Activated B cell treated with CpG ODN at 0.5 μM for 24 hours (primary cell): ENCODE measurements at regions of chr17 and their contacts with region 1.

Region 1: GRCh38 chr17:8222630-8223356 is 12.4 kb upstream of the AURKB start:
- DNase-seq: peak; percentile 80
- ATAC-seq: peak; percentile 51
- H3K4me3 Mint-ChIP-seq: peak overlapping the region; percentile 97
- H3K27ac Mint-ChIP-seq: peak overlapping the region; percentile 97
- H3K4me1 Mint-ChIP-seq: peaks cover 68% of the 10 kb centered on the region
- H3K27me3 Mint-ChIP-seq: peaks cover 11% of the 10 kb centered on the region
- CTCF ChIP-seq: no peak

Region 2: GRCh38 chr17:7951143-7951803 is 271.5 kb before region 1 on chr17:
- CTCF ChIA-PET with region 1: no interaction called
- POLR2A ChIA-PET with region 1: no interaction called
- intact Hi-C with region 1: no loop called
- DNase-seq: no peak
- ATAC-seq: peak; percentile 87
- H3K4me3 Mint-ChIP-seq: no peak overlapping the region
- H3K27ac Mint-ChIP-seq: peak overlapping the region; percentile 86
- H3K4me1 Mint-ChIP-seq: peaks cover 10% of the 10 kb centered on the region
- H3K27me3 Mint-ChIP-seq: no peaks in the 10 kb centered on the region
- CTCF ChIP-seq: no peak

Region 3: DNA sequence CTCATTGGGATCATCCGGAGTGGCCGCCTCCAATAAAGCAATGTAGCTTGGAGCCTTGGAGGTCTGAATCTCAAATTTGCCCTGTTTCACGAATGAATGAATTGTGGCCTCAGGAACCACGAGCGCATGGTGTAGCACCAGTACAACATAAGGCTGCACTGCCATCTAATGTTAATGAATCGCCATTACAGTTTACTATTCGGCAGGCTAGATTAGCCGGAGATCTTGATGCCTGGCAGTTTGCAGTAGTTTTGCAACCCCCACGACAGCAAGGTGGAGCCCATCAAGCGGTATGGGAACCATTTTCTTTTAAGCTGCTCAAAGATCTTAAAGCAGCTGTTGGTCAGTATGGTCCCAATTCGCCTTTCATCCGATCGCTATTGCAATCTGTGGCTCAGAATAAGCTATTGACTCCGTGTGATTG is 165.1 kb before region 1 on chr17:
- CTCF ChIA-PET with region 1: no interaction called
- POLR2A ChIA-PET with region 1: no interaction called
- intact Hi-C with region 1: no loop called
- DNase-seq: no peak
- ATAC-seq: peak; percentile 80
- H3K4me3 Mint-ChIP-seq: no peak overlapping the region
- H3K27ac Mint-ChIP-seq: no peak overlapping the region
- H3K4me1 Mint-ChIP-seq: peaks cover 25% of the 10 kb centered on the region
- H3K27me3 Mint-ChIP-seq: peaks cover 19% of the 10 kb centered on the region
- CTCF ChIP-seq: no peak

Region 4: GRCh38 chr17:8091033-8091687 is 131.6 kb before region 1 on chr17:
- CTCF ChIA-PET with region 1: no interaction called
- POLR2A ChIA-PET with region 1: interaction called, 16 read pairs
- intact Hi-C with region 1: no loop called
- DNase-seq: peak; percentile 71
- ATAC-seq: peak; percentile 90
- H3K4me3 Mint-ChIP-seq: peak overlapping the region; percentile 80
- H3K27ac Mint-ChIP-seq: peak overlapping the region; percentile 95
- H3K4me1 Mint-ChIP-seq: peaks cover 46% of the 10 kb centered on the region
- H3K27me3 Mint-ChIP-seq: peaks cover 7% of the 10 kb centered on the region
- CTCF ChIP-seq: no peak

Region 5: GRCh38 chr17:8156246-8156992 is 66.4 kb before region 1 on chr17:
- CTCF ChIA-PET with region 1: interaction called, 3 read pairs
- POLR2A ChIA-PET with region 1: interaction called, 14 read pairs
- intact Hi-C with region 1: loop called (anchors 1 kb)
- DNase-seq: peak; percentile 98
- ATAC-seq: peak; percentile 82
- H3K4me3 Mint-ChIP-seq: no peak overlapping the region
- H3K27ac Mint-ChIP-seq: no peak overlapping the region
- H3K4me1 Mint-ChIP-seq: peaks cover 48% of the 10 kb centered on the region
- H3K27me3 Mint-ChIP-seq: no peaks in the 10 kb centered on the region
- CTCF ChIP-seq: no peak

Region 6: DNA sequence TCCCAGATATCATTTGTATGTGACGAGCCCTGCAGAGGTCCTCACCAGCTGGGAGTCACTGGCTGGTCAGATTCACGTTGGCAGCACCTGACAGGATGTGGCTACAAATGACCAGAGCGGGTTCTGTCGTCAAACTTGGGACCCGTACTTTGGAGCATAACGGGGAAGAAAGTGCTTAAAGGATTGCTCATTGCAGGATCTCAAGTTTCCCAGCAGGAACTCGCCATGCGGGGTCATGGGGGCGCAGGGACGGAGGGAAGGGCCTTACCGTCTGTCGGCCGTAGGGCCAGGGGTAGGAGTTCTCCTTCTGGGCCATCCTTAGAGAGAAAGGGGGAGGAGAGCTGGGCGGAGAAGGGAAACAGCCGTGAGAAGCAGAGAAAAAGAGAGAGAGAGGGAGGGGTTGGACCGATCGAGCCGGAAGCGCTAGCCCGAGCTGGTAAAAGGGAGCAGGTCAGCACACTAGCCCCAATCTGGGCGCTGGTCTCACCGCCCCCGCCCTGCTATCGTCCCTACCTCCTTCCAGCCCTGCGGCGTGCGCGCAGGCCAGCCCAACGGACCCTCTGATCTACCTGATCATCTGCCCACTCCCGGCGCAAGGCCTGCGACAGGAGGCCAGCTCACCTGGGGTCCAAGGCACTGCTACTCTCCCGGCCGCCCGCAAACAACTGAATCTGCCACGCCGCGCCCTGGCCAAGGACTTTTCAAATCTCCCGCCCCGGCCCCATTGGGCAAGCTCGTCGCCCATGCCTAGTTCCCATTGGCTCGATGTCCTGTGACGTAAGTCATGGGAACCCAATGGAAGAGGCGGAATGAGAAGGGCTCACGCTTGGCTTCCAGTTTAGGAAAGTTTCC is 12.7 kb before region 1 on chr17 and contains the start of gene AURKB:
- CTCF ChIA-PET with region 1: interaction called, 4 read pairs
- POLR2A ChIA-PET with region 1: interaction called, 84 read pairs
- intact Hi-C with region 1: loop called (anchors 1 kb)
- DNase-seq: peak; percentile 80
- ATAC-seq: peak; percentile 99
- H3K4me3 Mint-ChIP-seq: peak within 1 kb of the TSS; percentile 95
- H3K27ac Mint-ChIP-seq: peak within 1 kb of the TSS; percentile 91
- H3K4me1 Mint-ChIP-seq: peaks cover 19% of the 10 kb centered on the region
- H3K27me3 Mint-ChIP-seq: no peaks in the 10 kb centered on the region
- CTCF ChIP-seq: no peak
- total RNA-seq, gene AURKB: 1.7 and 3.0 TPM in 2 replicates

Region 7: DNA sequence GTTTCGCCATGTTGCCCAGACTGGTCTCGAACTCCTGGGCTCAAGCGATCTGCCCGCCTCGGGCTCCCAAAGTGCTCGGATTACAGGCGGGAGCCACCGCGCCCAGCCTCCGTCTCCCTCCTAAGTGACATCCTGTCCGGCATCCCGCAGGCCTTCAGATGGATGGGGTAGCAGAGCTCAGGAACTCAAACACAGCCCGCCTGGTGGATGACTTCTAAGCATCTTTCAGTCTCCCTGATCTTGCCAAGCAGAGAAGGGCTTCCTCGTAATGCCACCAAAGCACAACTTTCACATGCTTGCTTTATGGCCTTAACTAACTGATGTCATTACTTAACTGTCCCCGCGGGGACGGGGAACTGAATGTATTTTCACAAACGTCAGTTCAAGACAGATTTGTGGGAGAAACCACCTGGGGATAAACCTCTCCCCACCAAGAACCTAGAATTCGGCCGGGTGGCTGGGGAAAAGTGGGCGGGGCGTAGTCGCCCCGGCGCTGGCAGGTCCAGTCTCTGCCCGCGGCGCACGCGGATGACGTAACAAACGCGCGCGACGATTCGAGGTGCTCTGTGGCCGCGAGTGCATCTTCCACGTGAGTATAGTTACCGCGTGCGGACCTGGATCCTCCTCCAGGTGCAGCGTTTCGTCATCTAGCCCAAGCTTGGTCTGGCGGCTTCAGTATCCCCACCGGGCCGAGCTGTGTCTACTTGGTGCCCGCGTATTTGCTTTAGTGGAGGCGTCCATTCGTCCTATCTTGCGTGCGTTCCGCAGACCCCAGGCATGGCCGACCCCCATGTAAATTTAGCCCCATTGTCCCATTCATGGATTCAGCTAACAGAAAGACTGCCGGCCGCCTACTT is 26.2 kb after region 1 on chr17 and contains the start of gene PFAS:
- CTCF ChIA-PET with region 1: interaction called, 9 read pairs
- POLR2A ChIA-PET with region 1: interaction called, 413 read pairs
- intact Hi-C with region 1: loop called (anchors 1 kb)
- DNase-seq: peak; percentile 99
- ATAC-seq: peak; percentile 47
- H3K4me3 Mint-ChIP-seq: peak within 1 kb of the TSS; percentile 99
- H3K27ac Mint-ChIP-seq: peak within 1 kb of the TSS; percentile 99
- H3K4me1 Mint-ChIP-seq: peaks cover 43% of the 10 kb centered on the region
- H3K27me3 Mint-ChIP-seq: no peaks in the 10 kb centered on the region
- CTCF ChIP-seq: no peak
- total RNA-seq, gene PFAS: 121 and 126 TPM in 2 replicates

Region 8: DNA sequence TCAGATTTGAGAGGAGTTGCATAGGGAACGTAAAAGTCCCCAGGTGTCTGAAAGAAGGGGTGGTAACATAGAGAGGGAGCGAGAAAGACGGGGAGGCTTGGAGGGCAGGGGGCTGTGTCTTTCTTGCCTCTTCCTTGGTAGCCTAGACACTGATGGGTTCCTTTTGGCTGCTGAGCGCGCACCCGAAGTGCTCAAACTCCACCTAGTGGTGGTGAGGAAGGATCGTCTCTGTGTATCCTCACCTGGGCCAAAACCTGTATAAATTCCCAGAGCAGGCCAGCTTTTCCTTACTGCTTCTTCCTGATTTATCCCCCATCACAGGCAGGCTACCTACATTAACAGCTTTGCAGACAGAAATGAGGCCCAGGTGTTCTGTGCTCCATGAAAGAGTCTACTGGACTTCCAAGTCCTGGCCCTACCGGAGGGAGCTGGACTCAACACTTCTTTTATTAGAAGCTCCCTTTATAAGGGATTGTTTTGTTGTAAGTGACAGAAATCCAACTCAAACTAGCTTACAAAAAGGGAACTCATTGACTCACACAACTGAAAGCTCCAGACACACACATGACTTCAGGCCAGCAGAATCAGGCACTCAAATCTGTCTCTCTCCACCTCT is 77.9 kb after region 1 on chr17:
- CTCF ChIA-PET with region 1: interaction called, 8 read pairs
- POLR2A ChIA-PET with region 1: interaction called, 68 read pairs
- intact Hi-C with region 1: loop called (anchors 1 kb)
- DNase-seq: peak; percentile 30
- ATAC-seq: peak; percentile 97
- H3K4me3 Mint-ChIP-seq: no peak overlapping the region
- H3K27ac Mint-ChIP-seq: peak overlapping the region; percentile 46
- H3K4me1 Mint-ChIP-seq: peaks cover 8% of the 10 kb centered on the region
- H3K27me3 Mint-ChIP-seq: no peaks in the 10 kb centered on the region
- CTCF ChIP-seq: no peak